Common myeloid progenitor, CD34-positive (primary cell): ENCODE measurements at regions of chr18 and their contacts with region 1.

Region 1: DNA sequence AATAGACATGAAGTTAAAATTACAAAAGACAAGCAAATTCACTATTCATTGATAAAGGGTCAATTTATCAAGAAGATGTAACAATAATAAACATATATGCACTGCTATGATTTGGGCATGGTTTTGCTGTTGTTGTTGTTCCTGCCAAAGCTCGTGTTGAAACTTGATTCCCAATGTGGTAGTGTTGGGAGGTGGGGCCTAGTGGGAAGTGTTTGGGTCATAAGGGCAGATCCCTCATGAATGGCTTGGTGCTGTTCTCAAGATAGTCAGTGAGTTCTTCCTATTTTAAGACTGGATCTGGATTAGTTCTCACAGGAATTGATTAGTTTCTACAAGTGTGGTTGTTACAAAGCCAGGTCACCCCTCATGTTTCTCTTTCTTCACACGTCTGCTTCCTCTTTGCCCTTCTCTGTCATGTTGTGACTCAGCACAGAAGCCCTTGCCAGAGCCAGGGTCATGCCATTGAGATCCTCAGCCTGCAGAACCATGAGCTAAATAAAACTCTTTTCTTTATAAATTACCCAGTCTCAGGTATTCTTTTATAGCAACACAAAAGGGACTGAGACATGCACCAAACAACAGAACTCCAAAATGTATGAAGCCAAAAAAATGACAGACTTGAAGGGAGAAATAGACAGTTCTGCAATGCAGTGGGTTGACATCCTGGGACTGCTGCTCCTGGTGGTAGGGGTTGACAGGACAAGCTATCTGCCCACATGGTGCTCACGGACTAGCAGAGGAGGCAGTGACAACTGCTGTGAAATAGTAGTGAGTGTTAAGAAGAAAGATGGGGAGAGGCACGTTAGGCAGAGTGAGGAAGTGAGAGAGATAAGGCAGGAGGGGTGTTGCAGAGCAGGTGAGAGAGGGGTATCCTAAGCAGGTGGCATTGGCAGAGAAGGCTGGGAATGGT is 18.6 kb upstream of the SKA1 start:
- DNase-seq: peak; percentile 22 to 77 (median 72)
- H3K4me3 ChIP-seq: no peak overlapping the region
- H3K27ac ChIP-seq: no peak overlapping the region
- H3K4me1 ChIP-seq: peaks cover 0 to 9% (median 3%) of the 10 kb centered on the region in 4 experiments
- H3K27me3 ChIP-seq: peaks cover 3 to 15% (median 7%) of the 10 kb centered on the region in 5 experiments

Region 2: GRCh38 chr18:50203801-50204604 is 152.3 kb before region 1 on chr18:
- CTCF ChIA-PET with region 1: interaction called, 13 read pairs
- POLR2A ChIA-PET with region 1: no interaction called
- DNase-seq: peak; percentile 27 to 42 (median 41)
- H3K4me3 ChIP-seq: peak overlapping the region in 2 of 7 experiments; percentile 7 to 8
- H3K27ac ChIP-seq: no peak overlapping the region
- H3K4me1 ChIP-seq: peaks cover 0 to 3% (median 1%) of the 10 kb centered on the region in 4 experiments
- H3K27me3 ChIP-seq: peaks cover 0 to 53% (median 18%) of the 10 kb centered on the region in 5 experiments

Region 3: GRCh38 chr18:50218432-50219197 is 137.7 kb before region 1 on chr18:
- CTCF ChIA-PET with region 1: interaction called, 44 read pairs
- POLR2A ChIA-PET with region 1: no interaction called
- DNase-seq: peak; percentile 45 to 62 (median 52)
- H3K4me3 ChIP-seq: no peak overlapping the region
- H3K27ac ChIP-seq: no peak overlapping the region
- H3K4me1 ChIP-seq: no peaks in the 10 kb centered on the region
- H3K27me3 ChIP-seq: peaks cover 0 to 25% (median 5%) of the 10 kb centered on the region in 5 experiments

Region 4: DNA sequence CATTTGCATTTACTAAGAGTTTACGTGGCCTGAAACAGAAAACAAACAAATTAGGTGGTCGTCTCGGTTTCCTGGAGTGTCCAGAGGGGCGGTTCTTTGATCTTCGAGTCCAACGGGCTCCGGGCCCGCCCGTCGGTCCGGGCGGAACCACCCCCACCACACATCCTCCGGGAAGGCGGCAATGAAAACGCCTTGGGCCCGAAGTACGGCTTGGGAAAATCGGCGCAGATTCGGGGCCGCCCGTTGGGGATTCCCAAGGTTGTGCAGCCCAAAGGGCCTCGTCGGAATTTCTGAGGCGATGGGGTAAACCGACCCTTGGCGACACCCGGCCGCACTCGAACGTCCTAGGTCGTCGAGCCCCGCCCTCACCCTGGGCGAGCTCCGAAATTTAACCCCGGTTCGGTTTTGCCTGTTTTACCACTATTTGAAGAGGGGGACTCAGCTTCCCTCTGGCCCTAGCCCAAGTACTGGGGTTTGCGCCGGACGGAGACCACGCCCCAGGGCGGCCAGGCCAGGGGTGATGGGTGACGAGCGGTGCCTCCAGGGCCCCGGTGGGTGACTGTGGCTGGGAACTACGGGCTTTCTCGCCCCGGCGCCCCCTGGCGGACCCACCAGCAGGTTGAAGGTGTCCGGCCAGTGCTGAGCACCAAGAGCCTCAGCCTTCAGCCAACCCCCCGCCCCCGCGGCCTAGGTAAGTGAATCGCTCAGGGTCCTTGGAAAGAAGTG is 88.1 kb before region 1 on chr18:
- CTCF ChIA-PET with region 1: interaction called, 14 read pairs
- POLR2A ChIA-PET with region 1: no interaction called
- DNase-seq: peak; percentile 80
- H3K4me3 ChIP-seq: peak overlapping the region in 6 of 7 experiments; percentile 29 to 91 (median 78)
- H3K27ac ChIP-seq: peak overlapping the region in 1 of 2 experiments; percentile 37
- H3K4me1 ChIP-seq: peaks cover 0 to 24% (median 12%) of the 10 kb centered on the region in 4 experiments
- H3K27me3 ChIP-seq: no peaks in the 10 kb centered on the region

Region 5: DNA sequence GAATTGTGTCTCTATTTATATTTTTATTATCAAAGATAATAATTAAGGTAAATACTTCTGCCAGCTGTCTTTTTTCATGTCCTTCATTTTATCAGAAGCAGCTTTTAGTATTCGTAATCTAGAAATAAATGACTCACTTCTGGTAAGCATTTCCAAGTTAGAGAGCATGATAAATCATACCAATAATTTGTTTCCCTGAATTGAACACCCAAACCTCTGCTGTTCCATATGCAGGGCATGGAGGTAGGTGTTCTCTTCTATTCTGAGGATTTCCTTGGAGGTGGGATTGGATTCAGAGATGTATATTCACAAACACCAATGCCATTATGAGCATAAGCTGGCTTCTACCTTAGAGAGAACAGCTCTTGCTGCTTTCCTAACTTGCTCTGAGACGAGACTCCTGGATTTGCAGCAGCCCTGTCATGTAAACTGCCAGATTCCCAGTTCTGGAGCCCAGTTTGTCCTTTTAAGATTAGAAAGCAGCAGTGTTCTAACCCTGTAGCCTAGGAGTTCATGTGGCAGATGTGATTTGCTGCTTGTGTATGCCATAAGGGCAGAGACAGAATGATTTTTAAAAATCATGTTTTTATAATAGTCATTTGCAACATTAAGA is 66.1 kb after region 1 on chr18:
- CTCF ChIA-PET with region 1: no interaction called
- POLR2A ChIA-PET with region 1: no interaction called
- DNase-seq: no peak
- H3K4me3 ChIP-seq: no peak overlapping the region
- H3K27ac ChIP-seq: no peak overlapping the region
- H3K4me1 ChIP-seq: no peaks in the 10 kb centered on the region
- H3K27me3 ChIP-seq: peaks cover 0 to 2% (median 0%) of the 10 kb centered on the region in 5 experiments